ENCODE measurements at regions of chr2 and their contacts with region 1.

Region 1: DNA sequence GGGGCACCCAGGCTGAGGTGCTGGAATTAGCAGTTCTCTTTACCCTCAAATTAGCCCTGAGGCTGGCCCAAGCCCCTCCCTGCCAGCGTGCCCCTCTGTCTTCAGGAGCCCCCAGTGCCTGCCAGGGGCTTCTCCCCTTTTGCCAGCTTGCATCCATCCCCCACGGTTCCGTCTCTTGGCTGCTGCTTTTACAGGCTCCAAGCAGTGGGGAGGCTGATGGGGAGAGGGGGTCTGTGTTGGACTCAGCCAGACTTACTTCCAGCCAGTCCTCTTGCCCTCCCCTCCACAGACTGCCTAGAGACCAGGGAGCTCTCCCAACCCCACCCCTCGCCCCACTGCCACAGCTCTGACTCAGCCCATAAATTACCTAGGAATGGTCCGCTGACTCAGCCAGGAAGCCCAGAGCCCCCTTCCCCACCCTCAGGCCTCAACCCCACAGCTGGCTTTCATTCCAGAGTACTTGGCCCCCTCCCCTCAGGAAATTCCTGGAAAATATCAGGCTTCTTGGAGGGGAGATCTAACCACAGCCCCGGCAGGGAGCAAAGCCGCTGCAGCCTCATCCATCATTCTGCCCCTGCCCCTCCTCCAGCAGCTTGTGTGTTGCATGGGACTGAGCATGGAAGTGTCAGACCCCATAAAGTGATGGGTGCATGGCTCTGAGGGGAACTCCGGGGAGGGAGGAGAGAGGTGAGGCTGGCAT is 184.6 kb downstream of the ZFP36L2 start:
- DNase-seq: peak; percentile 86 to 90
- ATAC-seq: peak; percentile 73
- H3K4me3 ChIP-seq: no peak overlapping the region
- H3K27ac ChIP-seq: peak overlapping the region in 1 of 2 donors; percentile 29
- H3K4me1 ChIP-seq: no peaks in the 10 kb centered on the region
- H3K27me3 ChIP-seq: no peaks in the 10 kb centered on the region

Region 2: DNA sequence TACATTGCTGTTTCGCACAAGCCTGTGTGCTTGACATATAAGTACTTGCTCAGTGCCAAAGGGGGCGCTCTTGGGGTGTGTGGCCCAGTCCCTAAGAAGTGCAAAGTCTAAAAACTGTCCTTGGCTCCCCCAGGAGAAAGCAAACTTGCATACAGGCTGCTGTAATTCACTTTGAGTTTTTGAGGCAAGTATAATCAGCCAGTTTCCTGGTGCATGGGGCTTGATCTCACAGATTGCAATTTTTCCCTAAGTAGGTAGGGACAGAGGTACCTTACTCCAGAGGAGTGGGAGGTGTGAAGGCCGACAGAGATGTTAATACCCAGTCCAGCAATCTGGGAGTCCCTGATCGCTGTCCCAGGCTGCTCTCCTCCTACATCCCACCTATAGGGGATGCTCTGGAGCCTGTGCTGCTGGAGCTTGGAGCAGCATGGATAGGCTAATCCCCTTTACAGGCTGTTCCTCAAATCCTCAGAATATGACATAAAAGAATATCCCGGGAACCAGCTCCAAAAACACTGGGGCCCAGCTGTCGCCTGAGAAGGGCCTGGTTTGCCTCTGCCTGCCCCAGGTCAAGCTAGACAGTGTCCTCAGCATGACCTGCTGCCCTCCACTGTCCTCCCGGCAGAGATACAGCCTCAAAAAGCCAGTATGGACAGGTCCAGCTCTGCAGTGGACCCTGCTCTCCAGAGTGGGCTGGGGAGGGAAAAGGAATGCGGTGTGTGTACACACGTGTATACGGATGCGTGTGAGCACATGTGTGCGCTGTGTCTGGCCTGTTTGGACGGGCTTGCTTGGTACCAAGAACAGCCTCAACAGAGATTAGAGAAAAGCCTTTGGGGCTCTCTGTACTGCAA is 112.9 kb before region 1 on chr2:
- intact Hi-C with region 1: no loop called
- DNase-seq: peak; percentile 21 to 72
- ATAC-seq: no peak
- H3K4me3 ChIP-seq: no peak overlapping the region
- H3K27ac ChIP-seq: peak overlapping the region; percentile 53 to 71
- H3K4me1 ChIP-seq: peaks cover 0 to 5% of the 10 kb centered on the region in 2 donors
- H3K27me3 ChIP-seq: no peaks in the 10 kb centered on the region

Region 3: GRCh38 chr2:43086451-43087221 is 44.8 kb after region 1 on chr2:
- intact Hi-C with region 1: loop called in 1 of 2 experiments (anchors 5 kb)
- DNase-seq: peak; percentile 85 to 89
- ATAC-seq: peak; percentile 92
- H3K4me3 ChIP-seq: no peak overlapping the region
- H3K27ac ChIP-seq: peak overlapping the region; percentile 94 to 99
- H3K4me1 ChIP-seq: peaks cover 0 to 6% of the 10 kb centered on the region in 2 donors
- H3K27me3 ChIP-seq: no peaks in the 10 kb centered on the region